Posterior cingulate gyrus (tissue), 11 donors: ENCODE measurements at regions of chr21 and their contacts with region 1.

Region 1: GRCh38 chr21:36141513-36141925 is 6.6 kb downstream of the CBR3 start:
- DNase-seq: peak in 9 of 10 donors; percentile 17 to 91 (median 72)

Region 2: GRCh38 chr21:36209626-36210171 is 68.2 kb after region 1 on chr21:
- intact Hi-C with region 1: loop called (anchors 5 kb)
- DNase-seq: peak in 2 of 10 donors; percentile 35 to 52

Region 3: GRCh38 chr21:36330904-36331303 is 189.4 kb after region 1 on chr21:
- intact Hi-C with region 1: loop called (anchors 5 kb)
- DNase-seq: peak in 6 of 10 donors; percentile 21 to 89 (median 44)